ENCODE measurements at regions of chr5 and their contacts with region 1.

Region 1: DNA sequence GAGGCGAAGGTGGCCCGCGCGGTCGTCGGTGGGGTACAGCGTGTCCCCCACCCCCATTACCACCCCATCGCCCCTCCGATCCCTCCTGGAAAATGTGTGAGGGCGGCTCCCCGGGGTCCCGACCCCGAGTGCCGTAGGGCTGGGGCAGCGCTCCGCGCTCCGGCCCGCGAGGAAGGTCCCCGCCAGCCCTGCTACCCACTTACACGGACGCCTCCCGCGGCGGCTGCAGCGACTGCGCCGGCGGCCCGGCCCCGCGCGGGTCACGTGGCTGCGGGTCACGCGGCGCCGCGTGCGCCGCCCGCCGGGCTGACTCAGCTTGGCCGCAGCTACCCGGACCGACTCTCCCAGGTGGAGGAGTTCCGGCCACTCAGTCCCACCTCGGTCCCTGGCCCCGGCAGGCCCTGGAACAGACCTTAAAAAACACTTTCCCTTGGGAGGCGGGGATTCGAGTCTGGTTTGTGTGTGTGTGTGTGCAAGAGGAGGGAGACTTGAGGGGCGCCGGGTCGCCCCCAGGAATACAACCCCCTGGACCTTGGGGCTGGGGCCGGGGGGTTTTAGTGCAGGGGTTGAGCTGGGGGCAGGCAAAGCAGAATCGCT is at the start of gene GNPDA1:
- DNase-seq: peak; percentile 70 to 88
- ATAC-seq: peak; percentile 84 to 86
- H3K4me3 ChIP-seq: peak within 1 kb of the TSS; percentile 89
- H3K27ac ChIP-seq: peak within 1 kb of the TSS; percentile 94 to 95
- H3K4me1 ChIP-seq: peaks cover 39% of the 10 kb centered on the region
- CTCF ChIP-seq: no peak
- EP300 ChIP-seq: no peak
- POLR2A ChIP-seq: peak; percentile 82
- RAD21 ChIP-seq: no peak
- polyA plus RNA-seq, gene GNPDA1: 17.1 and 31.0 TPM in 2 replicates

Region 2: GRCh38 chr5:141968914-141969608 is 43.8 kb before region 1 on chr5 and contains the start of gene RNF14:
- CTCF ChIA-PET with region 1: interaction called, 5 read pairs
- POLR2A ChIA-PET with region 1: interaction called, 19 read pairs
- DNase-seq: peak; percentile 86 to 94
- ATAC-seq: peak; percentile 96 to 99
- H3K4me3 ChIP-seq: peak within 1 kb of the TSS; percentile 85
- H3K27ac ChIP-seq: peak within 1 kb of the TSS; percentile 94 to 96
- H3K4me1 ChIP-seq: peaks cover 22% of the 10 kb centered on the region
- CTCF ChIP-seq: peak; percentile 89
- EP300 ChIP-seq: no peak
- POLR2A ChIP-seq: peak; percentile 78
- RAD21 ChIP-seq: 0 out of 5 replicates have a peak, but pooled peaks of 1 of the 2 experiments have one; percentile 4
- polyA plus RNA-seq, gene RNF14: 47.4 and 57.5 TPM in 2 replicates

Region 3: DNA sequence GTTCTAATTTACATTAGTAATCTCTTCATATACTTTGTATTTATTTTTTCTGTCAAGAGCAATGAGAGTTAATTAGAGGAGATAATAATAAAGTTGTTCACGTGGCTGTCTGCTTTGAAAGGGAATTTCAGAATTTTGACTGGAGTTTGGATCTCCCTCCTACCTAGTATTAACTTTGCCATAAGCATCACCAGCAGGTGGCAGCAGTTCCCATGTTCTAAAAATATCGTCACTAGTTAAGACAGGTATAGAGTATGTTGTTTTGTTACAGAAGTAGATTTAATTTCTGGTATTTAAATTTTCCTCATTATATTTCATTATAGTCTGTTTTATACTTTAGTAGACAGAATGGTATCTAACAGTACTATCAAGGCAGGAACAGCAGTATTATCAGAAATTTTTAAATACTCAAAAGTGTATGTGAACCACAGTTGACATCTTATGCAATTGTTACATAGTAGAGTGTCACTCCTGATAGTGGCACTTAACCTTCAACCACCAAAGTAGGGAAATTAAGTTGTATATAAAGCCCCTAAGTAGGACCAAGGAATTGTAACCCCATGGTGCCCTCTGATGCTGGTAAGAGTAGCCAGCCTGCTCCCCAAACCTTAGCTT is 20.4 kb before region 1 on chr5:
- CTCF ChIA-PET with region 1: interaction called, 97 read pairs
- POLR2A ChIA-PET with region 1: interaction called, 3 read pairs
- DNase-seq: peak; percentile 64
- ATAC-seq: peak; percentile 74 to 93; a peak in 4 of 6 replicates
- H3K4me3 ChIP-seq: no peak overlapping the region
- H3K27ac ChIP-seq: no peak overlapping the region
- H3K4me1 ChIP-seq: no peaks in the 10 kb centered on the region
- CTCF ChIP-seq: peak; percentile 84
- EP300 ChIP-seq: no peak
- POLR2A ChIP-seq: no peak
- RAD21 ChIP-seq: peak; percentile 62 to 64

Region 4: GRCh38 chr5:142000703-142001484 is 12.0 kb before region 1 on chr5:
- CTCF ChIA-PET with region 1: interaction called, 20 read pairs
- POLR2A ChIA-PET with region 1: no interaction called
- DNase-seq: peak in 1 of 2 experiments; percentile 34
- ATAC-seq: peak; percentile 62 to 77; a peak in 4 of 6 replicates
- H3K4me3 ChIP-seq: no peak overlapping the region
- H3K27ac ChIP-seq: no peak overlapping the region
- H3K4me1 ChIP-seq: no peaks in the 10 kb centered on the region
- CTCF ChIP-seq: peak; percentile 36
- EP300 ChIP-seq: no peak
- POLR2A ChIP-seq: no peak
- RAD21 ChIP-seq: peak in 1 of 2 experiments; percentile 9; a peak in 1 of 5 replicates

Region 5: DNA sequence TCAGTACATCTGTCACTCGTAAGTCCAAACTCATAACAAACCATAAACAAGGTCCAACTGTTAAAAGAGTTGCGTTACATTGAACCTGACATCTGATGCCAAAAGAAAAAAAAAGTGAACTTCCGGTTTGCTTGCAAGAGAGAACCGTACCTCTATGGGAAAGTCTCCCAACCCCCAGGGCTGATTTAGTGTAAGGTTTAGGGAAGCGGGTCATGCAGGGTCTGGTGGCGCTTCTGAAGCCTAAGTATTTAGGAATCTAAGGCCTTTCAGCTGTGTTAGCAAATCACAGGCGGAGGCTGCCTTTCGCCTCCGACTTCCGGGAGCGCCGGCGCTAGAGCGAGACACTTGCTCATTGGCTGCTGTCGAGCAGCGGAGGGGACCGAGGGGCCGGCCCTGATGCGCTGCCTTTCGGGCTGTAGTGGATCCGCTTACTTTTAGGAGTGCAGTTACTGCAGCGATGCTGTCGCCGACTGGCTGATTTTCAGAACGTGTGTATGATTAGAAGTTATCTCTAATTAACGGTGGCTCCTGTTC is 11.9 kb after region 1 on chr5:
- CTCF ChIA-PET with region 1: interaction called, 17 read pairs
- POLR2A ChIA-PET with region 1: interaction called, 7 read pairs
- DNase-seq: peak; percentile 86 to 97
- ATAC-seq: peak; percentile 100
- H3K4me3 ChIP-seq: peak overlapping the region; percentile 46
- H3K27ac ChIP-seq: peak overlapping the region; percentile 77 to 86
- H3K4me1 ChIP-seq: peaks cover 4% of the 10 kb centered on the region; the same call in 1 of the 3 replicates
- CTCF ChIP-seq: no peak
- EP300 ChIP-seq: no peak
- POLR2A ChIP-seq: no peak
- RAD21 ChIP-seq: no peak

Region 6: GRCh38 chr5:142108432-142109330 is 95.8 kb after region 1 on chr5 and contains the start of gene NDFIP1:
- CTCF ChIA-PET with region 1: interaction called, 20 read pairs
- POLR2A ChIA-PET with region 1: interaction called, 7 read pairs
- DNase-seq: peak; percentile 67 to 86
- ATAC-seq: peak; percentile 98 to 99
- H3K4me3 ChIP-seq: peak within 1 kb of the TSS; percentile 77
- H3K27ac ChIP-seq: peak within 1 kb of the TSS; percentile 86 to 97
- H3K4me1 ChIP-seq: peaks cover 14% of the 10 kb centered on the region; the same call in 2 of the 3 replicates
- CTCF ChIP-seq: no peak
- EP300 ChIP-seq: no peak
- POLR2A ChIP-seq: peak; percentile 90
- RAD21 ChIP-seq: no peak; a peak in 1 of 5 replicates
- polyA plus RNA-seq, gene NDFIP1: 33.4 and 42.4 TPM in 2 replicates

Region 7: GRCh38 chr5:142145106-142145900 is 132.4 kb after region 1 on chr5:
- CTCF ChIA-PET with region 1: interaction called, 82 read pairs
- POLR2A ChIA-PET with region 1: interaction called, 4 read pairs
- DNase-seq: peak; percentile 57 to 73
- ATAC-seq: peak; percentile 93 to 97
- H3K4me3 ChIP-seq: no peak overlapping the region
- H3K27ac ChIP-seq: no peak overlapping the region
- H3K4me1 ChIP-seq: no peaks in the 10 kb centered on the region
- CTCF ChIP-seq: peak; percentile 72
- EP300 ChIP-seq: no peak
- POLR2A ChIP-seq: no peak
- RAD21 ChIP-seq: peak; percentile 35 to 59; a peak in 3 of 5 replicates